ENCODE measurements at regions of chr2 and their contacts with region 1.

Region 1: GRCh38 chr2:43877782-43878464 is 39.2 kb downstream of the ABCG8 start:
- DNase-seq: peak; percentile 88
- ATAC-seq: peak; percentile 86
- H3K4me3 Mint-ChIP-seq: no peak overlapping the region
- H3K27ac Mint-ChIP-seq: no peak overlapping the region
- H3K4me1 Mint-ChIP-seq: peaks cover 2% of the 10 kb centered on the region
- H3K27me3 Mint-ChIP-seq: peaks cover 3% of the 10 kb centered on the region; the same call in 1 of the 2 replicates
- CTCF ChIP-seq: peak; percentile 97

Region 2: DNA sequence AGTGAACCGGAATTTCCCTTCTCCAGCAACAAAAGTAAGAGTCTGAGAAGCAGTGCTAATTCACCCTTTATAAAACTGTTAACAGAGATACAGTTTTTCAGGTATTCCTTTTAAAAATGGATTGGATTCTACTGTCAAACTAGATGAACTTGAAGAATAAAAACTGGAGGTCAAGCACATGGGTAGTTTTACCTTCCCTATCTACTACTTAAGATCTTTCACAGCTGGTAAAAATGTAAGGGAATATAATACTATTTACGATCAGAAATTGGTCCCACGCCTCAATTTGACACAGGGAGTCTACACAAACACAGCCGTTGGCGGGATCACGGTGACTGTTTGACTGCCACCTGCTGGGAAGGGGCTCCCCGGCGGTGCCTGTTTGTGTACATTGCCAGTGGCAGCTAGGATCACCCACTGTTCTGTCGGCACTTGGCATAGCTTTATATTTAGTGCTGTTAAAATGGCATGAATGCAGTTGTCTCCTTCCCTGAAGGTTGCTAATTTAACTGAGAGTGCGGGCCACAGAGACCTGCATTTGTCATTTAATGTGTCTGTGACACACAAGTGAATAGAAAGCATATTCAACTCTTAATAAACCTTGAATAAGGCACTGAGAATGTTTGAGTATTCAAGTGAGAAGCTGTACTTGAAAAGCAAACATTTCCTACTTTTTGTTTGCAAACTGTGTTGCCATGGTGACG is 20.4 kb after region 1 on chr2:
- CTCF ChIA-PET with region 1: interaction called, 12 read pairs
- POLR2A ChIA-PET with region 1: no interaction called
- DNase-seq: peak; percentile 38
- ATAC-seq: peak; percentile 30
- H3K4me3 Mint-ChIP-seq: no peak overlapping the region
- H3K27ac Mint-ChIP-seq: peak overlapping the region; percentile 24; the same call in 1 of the 2 replicates
- H3K4me1 Mint-ChIP-seq: no peaks in the 10 kb centered on the region; the same call in 1 of the 2 replicates
- H3K27me3 Mint-ChIP-seq: no peaks in the 10 kb centered on the region
- CTCF ChIP-seq: no peak

Region 3: DNA sequence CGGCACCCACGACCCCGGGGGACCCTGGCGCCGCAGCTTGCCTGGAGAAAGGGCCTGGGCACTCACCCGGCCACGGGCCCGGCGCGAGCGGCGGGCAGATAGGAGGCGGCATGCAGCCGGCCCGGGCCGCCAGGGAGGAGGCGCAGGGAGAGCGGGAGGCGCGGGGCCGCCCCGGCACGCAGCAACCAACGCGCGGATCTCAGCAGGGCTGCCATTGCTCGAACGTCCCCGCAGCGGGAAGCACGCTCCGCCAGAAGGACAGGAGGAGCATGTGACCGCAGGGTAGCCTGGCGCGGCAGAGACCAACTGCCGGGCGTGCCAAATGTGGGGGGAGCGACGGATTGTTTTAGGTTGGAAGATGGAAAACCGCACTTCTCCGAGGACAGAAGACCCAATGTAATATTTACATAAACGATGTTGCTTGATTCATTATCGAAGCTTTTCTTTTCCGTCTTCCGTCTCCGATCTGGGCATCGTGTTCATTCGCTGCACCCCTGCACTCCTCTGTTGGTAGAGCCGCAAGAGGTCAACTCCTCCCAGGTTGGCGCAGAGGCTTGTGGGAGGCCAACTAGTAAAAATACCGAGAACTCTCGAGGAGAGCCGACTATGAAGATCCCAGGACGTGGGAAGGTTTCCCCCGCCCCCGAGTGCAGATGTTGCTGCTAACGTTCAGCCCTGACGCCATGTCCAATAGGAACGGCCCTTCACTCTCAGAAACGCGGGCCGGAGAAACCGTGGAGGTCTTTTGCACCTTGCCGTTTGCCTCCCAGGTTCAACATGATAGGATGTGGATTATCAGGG is 118.0 kb after region 1 on chr2 and contains the start of gene LRPPRC:
- CTCF ChIA-PET with region 1: no interaction called
- POLR2A ChIA-PET with region 1: no interaction called
- DNase-seq: peak; percentile 89
- ATAC-seq: peak; percentile 96
- H3K4me3 Mint-ChIP-seq: peak within 1 kb of the TSS; percentile 92
- H3K27ac Mint-ChIP-seq: peak within 1 kb of the TSS; percentile 100
- H3K4me1 Mint-ChIP-seq: peaks cover 31% of the 10 kb centered on the region
- H3K27me3 Mint-ChIP-seq: no peaks in the 10 kb centered on the region
- CTCF ChIP-seq: no peak
- total RNA-seq, gene LRPPRC: 220 to 253 TPM (median 228 TPM) in 3 replicates

Region 4: DNA sequence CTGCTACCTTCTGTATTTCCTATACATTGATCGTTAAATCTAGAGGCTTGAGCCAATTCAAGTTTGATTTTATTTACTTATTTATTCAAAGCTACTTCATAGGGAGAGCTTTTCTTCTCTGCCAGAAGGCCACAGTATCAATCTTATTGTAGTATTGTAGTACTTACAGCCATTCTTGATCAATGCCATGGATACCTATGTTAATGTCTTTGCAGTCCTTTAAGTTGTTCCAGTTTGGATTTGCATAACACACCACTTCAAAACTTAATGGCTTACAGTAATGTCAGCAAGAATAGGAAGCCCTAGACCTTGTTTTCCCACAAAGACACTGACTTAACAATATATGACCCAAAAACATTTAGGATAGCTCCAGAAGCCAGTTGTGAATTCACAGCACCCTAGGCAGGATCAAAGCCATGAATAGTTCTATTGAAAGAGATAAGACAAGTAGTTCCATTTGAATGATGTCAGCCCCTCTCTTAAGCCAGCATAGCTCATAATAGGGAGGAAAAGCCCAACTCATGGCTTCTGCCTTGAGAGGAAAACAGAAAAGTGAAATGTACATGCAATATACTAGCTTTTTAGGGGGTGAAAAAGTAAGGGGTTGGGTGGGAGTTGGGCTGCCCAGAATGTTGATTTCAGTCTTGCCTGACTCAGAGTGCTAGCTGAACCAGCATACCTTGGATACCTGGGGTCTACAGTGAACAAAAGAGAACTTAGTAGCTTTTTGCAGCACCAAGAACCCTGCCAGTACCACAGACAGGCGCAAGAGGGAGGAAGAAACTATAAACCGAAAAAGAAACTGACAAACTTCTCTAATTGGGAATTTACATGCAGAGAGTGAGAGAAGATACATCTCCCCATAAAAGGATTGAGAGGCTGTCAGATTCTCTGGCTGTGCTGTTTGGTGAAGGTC is 585.3 kb after region 1 on chr2:
- CTCF ChIA-PET with region 1: no interaction called
- POLR2A ChIA-PET with region 1: no interaction called
- DNase-seq: peak; percentile 34
- ATAC-seq: peak; percentile 98
- H3K4me3 Mint-ChIP-seq: peak overlapping the region; percentile 20
- H3K27ac Mint-ChIP-seq: peak overlapping the region; percentile 97
- H3K4me1 Mint-ChIP-seq: peaks cover 55% of the 10 kb centered on the region
- H3K27me3 Mint-ChIP-seq: no peaks in the 10 kb centered on the region
- CTCF ChIP-seq: no peak

Measured in WTC11 (cell line).